WTC11 (cell line): ENCODE measurements at regions of chr20 and their contacts with region 1.

Region 1: GRCh38 chr20:44747166-44748004 is 1.7 kb downstream of the KCNK15 start:
- DNase-seq: peak; percentile 95
- ATAC-seq: peak; percentile 73
- H3K4me3 Mint-ChIP-seq: peak overlapping the region; percentile 75
- H3K27ac Mint-ChIP-seq: no peak overlapping the region
- H3K4me1 Mint-ChIP-seq: peaks cover 15% of the 10 kb centered on the region
- H3K27me3 Mint-ChIP-seq: peaks cover 47% of the 10 kb centered on the region
- CTCF ChIP-seq: peak; percentile 76

Region 2: GRCh38 chr20:44603327-44603726 is 144.1 kb before region 1 on chr20:
- CTCF ChIA-PET with region 1: no interaction called
- POLR2A ChIA-PET with region 1: no interaction called
- DNase-seq: peak; percentile 25
- ATAC-seq: peak; percentile 63
- H3K4me3 Mint-ChIP-seq: no peak overlapping the region
- H3K27ac Mint-ChIP-seq: no peak overlapping the region
- H3K4me1 Mint-ChIP-seq: peaks cover 10% of the 10 kb centered on the region
- H3K27me3 Mint-ChIP-seq: no peaks in the 10 kb centered on the region
- CTCF ChIP-seq: no peak

Region 3: DNA sequence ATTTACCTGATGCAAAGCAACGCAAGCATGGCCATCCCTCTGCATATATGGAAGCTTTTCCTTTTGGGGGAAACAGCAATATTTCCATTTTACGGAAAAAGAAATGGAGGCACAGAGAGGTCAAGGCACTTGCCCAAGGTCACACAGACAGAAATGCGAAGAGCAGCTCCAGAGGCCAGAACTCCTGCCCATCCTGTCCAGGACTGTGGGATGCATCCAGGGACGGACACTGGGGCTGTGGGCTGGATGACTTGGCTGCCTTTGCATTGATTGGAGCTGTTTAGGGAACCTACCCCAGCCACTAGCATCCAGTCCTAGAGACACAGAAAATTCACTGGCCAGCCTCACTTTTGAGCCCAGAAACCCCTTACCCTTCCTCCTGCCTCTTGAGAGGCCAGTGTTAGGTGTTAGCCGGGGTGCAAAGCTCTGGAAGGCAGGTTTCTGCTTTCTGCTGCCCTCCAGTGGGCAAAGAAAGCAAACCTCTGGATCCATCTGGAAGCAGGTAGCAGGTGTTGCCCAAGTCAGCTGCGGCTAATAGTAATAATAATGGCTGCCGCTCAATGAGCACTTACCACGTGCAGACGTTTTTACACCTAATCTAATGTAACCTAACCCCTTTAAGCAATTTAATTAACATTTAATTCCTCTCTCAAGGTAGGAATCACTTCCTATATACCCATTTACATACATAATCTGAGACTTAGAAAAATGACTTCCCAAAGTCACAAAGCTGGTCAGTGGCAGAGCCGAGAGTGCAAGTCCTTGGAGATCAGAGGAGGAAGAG is 63.9 kb before region 1 on chr20:
- CTCF ChIA-PET with region 1: interaction called, 11 read pairs
- POLR2A ChIA-PET with region 1: interaction called, 3 read pairs
- DNase-seq: peak; percentile 85
- ATAC-seq: peak; percentile 81
- H3K4me3 Mint-ChIP-seq: no peak overlapping the region
- H3K27ac Mint-ChIP-seq: no peak overlapping the region
- H3K4me1 Mint-ChIP-seq: peaks cover 23% of the 10 kb centered on the region
- H3K27me3 Mint-ChIP-seq: peaks cover 10% of the 10 kb centered on the region
- CTCF ChIP-seq: peak; percentile 60

Region 4: GRCh38 chr20:44768256-44768655 is 20.9 kb after region 1 on chr20:
- CTCF ChIA-PET with region 1: interaction called, 14 read pairs
- POLR2A ChIA-PET with region 1: no interaction called
- DNase-seq: no peak
- ATAC-seq: no peak
- H3K4me3 Mint-ChIP-seq: no peak overlapping the region
- H3K27ac Mint-ChIP-seq: peak overlapping the region; percentile 39; the same call in 1 of the 2 replicates
- H3K4me1 Mint-ChIP-seq: peaks cover 4% of the 10 kb centered on the region; the same call in 1 of the 2 replicates
- H3K27me3 Mint-ChIP-seq: no peaks in the 10 kb centered on the region
- CTCF ChIP-seq: no peak

Region 5: GRCh38 chr20:44785769-44786168 is 38.4 kb after region 1 on chr20:
- CTCF ChIA-PET with region 1: interaction called, 56 read pairs
- POLR2A ChIA-PET with region 1: interaction called, 3 read pairs
- DNase-seq: peak; percentile 64
- ATAC-seq: peak; percentile 90
- H3K4me3 Mint-ChIP-seq: no peak overlapping the region
- H3K27ac Mint-ChIP-seq: peak overlapping the region; percentile 66; the same call in 1 of the 2 replicates
- H3K4me1 Mint-ChIP-seq: peaks cover 30% of the 10 kb centered on the region
- H3K27me3 Mint-ChIP-seq: no peaks in the 10 kb centered on the region
- CTCF ChIP-seq: no peak

Region 6: GRCh38 chr20:44805979-44806620 is 58.7 kb after region 1 on chr20:
- CTCF ChIA-PET with region 1: interaction called, 13 read pairs
- POLR2A ChIA-PET with region 1: no interaction called
- DNase-seq: peak; percentile 81
- ATAC-seq: peak; percentile 76
- H3K4me3 Mint-ChIP-seq: no peak overlapping the region
- H3K27ac Mint-ChIP-seq: no peak overlapping the region
- H3K4me1 Mint-ChIP-seq: peaks cover 22% of the 10 kb centered on the region
- H3K27me3 Mint-ChIP-seq: peaks cover 39% of the 10 kb centered on the region
- CTCF ChIP-seq: no peak

Region 7: DNA sequence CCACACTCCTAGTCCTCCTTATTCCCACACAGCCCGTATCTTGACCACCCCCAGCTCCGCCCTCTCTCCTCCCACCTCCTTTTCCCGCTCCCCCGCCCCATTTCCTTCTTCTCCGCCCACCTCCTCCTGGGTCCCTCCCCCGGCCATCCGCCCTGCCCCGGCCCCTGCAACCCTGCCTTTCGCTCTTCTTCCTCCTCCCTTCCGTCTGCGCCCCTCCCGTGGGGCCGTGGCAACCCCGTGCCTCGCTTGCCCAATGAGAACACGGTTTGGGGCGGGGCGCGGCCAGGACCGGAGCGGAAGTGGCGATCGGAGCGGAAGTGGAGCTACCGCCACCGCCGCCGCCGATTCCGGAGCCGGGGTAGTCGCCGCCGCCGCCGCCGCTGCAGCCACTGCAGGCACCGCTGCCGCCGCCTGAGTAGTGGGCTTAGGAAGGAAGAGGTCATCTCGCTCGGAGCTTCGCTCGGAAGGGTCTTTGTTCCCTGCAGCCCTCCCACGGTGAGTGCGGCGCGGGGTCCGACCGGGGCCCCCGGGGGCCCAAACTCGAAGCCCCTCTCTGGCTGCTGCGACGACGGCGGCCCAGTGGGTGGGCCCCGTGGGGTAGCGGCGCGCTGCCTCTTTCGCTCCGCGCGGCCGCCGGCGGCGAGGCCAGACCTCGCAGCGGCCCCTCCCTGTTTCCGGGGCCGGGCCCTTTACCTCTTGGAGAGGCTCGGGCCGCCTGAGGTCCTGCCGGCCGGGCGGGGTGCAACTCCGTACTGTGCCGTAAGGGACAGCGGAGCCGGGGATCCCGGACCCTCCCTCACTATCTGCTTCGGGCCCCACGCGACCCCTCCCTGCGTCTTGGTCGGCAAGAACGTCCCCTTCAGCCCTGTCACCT is 138.2 kb after region 1 on chr20 and contains the start of gene YWHAB:
- CTCF ChIA-PET with region 1: interaction called, 10 read pairs
- POLR2A ChIA-PET with region 1: no interaction called
- DNase-seq: peak; percentile 99
- ATAC-seq: peak; percentile 98
- H3K4me3 Mint-ChIP-seq: peak within 1 kb of the TSS; percentile 97
- H3K27ac Mint-ChIP-seq: peak within 1 kb of the TSS; percentile 91
- H3K4me1 Mint-ChIP-seq: peaks cover 46% of the 10 kb centered on the region
- H3K27me3 Mint-ChIP-seq: peaks cover 3% of the 10 kb centered on the region; the same call in 1 of the 2 replicates
- CTCF ChIP-seq: no peak
- total RNA-seq, gene YWHAB: 177 to 216 TPM (median 183 TPM) in 3 replicates